ENCODE measurements at regions of chr21 and their contacts with region 1.

Region 1: DNA sequence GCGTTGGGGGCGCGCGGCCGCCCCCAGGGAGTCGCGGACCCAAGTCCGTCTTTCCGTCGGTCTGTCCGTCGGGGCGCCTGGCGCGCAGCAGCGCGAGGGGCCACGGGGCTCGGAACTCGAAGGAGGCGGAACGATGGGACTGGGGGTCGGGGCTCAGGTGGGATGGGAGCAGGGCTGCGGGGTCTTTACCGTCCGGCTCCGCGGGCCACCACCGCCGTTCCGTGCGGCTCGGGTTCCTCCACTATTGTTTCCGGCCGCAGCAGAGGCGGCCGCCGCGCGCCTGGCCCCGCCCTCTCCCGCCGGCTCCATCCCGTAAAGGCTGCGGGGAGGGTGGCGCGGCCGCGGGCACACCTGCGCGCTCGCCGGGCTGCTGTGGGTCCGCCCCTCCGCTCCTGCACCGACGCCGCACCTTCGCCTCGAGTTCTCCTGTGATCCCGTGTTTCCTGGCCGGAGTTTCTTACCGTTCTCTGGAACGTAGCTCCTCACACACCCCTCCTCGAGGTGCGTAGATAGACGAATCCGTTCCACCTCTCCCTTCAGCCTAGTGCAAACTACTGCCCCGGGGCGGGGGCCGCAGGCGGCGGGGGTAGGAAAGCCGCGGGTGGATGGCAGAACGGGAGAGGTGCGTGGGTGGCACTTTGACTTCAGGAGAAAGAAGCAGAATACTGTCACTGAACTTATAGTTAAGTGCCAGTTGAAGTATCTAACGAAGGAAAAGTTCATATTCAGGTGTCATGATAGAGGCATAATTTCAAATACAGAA is at the start of gene C21orf91:
- DNase-seq: peak; percentile 74 to 93 (median 86)
- ATAC-seq: peak; percentile 85
- H3K4me3 ChIP-seq: peak within 1 kb of the TSS; percentile 82
- H3K4me3 Mint-ChIP-seq: peak within 1 kb of the TSS; percentile 97
- H3K27ac ChIP-seq: peak within 1 kb of the TSS; percentile 88 to 92
- H3K27ac Mint-ChIP-seq: peak within 1 kb of the TSS; percentile 95
- H3K4me1 ChIP-seq: peaks cover 21% of the 10 kb centered on the region
- H3K4me1 Mint-ChIP-seq: peaks cover 53% of the 10 kb centered on the region
- H3K27me3 ChIP-seq: no peaks in the 10 kb centered on the region
- H3K27me3 Mint-ChIP-seq: no peaks in the 10 kb centered on the region
- CTCF ChIP-seq: no peak
- total RNA-seq, gene C21orf91: 40.9 to 42.2 TPM

Region 2: GRCh38 chr21:17611414-17612022 is 207.8 kb before region 1 on chr21:
- CTCF ChIA-PET with region 1: no interaction called
- POLR2A ChIA-PET with region 1: interaction called, 13 read pairs
- intact Hi-C with region 1: loop called (anchors 2 kb)
- DNase-seq: peak; percentile 54 to 92 (median 72)
- ATAC-seq: peak; percentile 69
- H3K4me3 ChIP-seq: peak overlapping the region; percentile 91
- H3K4me3 Mint-ChIP-seq: peak overlapping the region; percentile 93
- H3K27ac ChIP-seq: peak overlapping the region; percentile 58 to 60
- H3K27ac Mint-ChIP-seq: peak overlapping the region; percentile 89
- H3K4me1 ChIP-seq: peaks cover 17% of the 10 kb centered on the region
- H3K4me1 Mint-ChIP-seq: peaks cover 40% of the 10 kb centered on the region
- H3K27me3 ChIP-seq: no peaks in the 10 kb centered on the region
- H3K27me3 Mint-ChIP-seq: no peaks in the 10 kb centered on the region
- CTCF ChIP-seq: no peak

Region 3: DNA sequence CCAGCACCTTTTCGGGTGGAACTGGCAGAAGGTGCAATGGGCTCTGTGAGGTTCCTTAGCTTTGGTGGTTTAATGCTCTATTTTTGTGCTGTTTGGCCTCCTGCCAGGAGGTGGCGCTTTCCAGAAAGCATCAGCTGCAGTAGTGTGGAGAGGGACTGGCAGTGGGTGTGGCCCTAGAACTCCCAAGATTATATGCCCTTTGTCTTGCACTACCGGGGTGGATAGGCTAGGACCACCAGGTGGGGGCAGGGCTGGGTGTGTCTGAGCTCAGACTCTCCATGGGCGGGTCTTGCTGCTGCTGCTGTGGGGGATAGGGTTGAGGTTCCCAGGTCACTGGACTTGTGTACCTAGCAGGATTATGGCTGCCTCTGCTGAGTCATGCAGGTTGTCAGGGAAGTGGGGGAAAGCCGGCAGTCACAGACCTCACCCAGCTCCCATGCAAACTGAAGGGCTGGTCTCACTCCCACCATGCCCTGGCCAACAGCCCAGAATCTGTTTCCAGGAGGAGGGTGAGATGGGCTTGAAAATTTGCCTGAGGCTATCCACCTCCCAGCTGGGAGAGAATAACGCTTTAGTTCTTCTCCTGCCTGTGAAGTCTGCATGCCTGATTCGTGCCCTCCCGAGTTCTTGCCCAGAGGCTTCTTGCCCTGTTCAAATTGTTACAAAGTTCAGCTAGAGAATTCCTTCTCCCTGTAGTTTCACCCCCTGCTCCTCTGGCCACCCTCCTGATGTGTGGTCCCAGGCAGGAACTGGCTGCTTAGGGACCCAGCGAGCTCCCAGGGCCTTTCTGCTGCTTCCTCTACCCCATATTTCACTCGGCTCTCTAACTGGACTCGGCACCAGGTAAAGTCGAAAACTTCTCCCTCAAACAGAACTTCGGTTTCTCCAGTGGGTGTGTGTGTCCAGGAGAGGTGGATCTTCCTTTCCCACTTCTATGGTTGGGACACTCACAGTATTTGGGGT is 130.1 kb before region 1 on chr21:
- CTCF ChIA-PET with region 1: no interaction called
- POLR2A ChIA-PET with region 1: interaction called, 3 read pairs
- intact Hi-C with region 1: loop called (anchors 2 to 5 kb)
- DNase-seq: peak; percentile 23 to 59 (median 40)
- ATAC-seq: no peak
- H3K4me3 ChIP-seq: no peak overlapping the region
- H3K4me3 Mint-ChIP-seq: no peak overlapping the region
- H3K27ac ChIP-seq: no peak overlapping the region
- H3K27ac Mint-ChIP-seq: no peak overlapping the region
- H3K4me1 ChIP-seq: peaks cover 15% of the 10 kb centered on the region
- H3K4me1 Mint-ChIP-seq: peaks cover 36% of the 10 kb centered on the region
- H3K27me3 ChIP-seq: no peaks in the 10 kb centered on the region
- H3K27me3 Mint-ChIP-seq: no peaks in the 10 kb centered on the region
- CTCF ChIP-seq: peak; percentile 30

Region 4: GRCh38 chr21:17780539-17780938 is 38.8 kb before region 1 on chr21:
- CTCF ChIA-PET with region 1: interaction called, 3 read pairs
- POLR2A ChIA-PET with region 1: interaction called, 167 read pairs
- intact Hi-C with region 1: loop called (anchors 1 to 2 kb)
- DNase-seq: peak in 12 of 14 experiments; percentile 14 to 89 (median 44)
- ATAC-seq: peak; percentile 60
- H3K4me3 ChIP-seq: no peak overlapping the region
- H3K4me3 Mint-ChIP-seq: peak overlapping the region; percentile 62
- H3K27ac ChIP-seq: peak overlapping the region; percentile 64 to 77
- H3K27ac Mint-ChIP-seq: peak overlapping the region; percentile 93
- H3K4me1 ChIP-seq: peaks cover 57% of the 10 kb centered on the region
- H3K4me1 Mint-ChIP-seq: peaks cover 79% of the 10 kb centered on the region
- H3K27me3 ChIP-seq: no peaks in the 10 kb centered on the region
- H3K27me3 Mint-ChIP-seq: no peaks in the 10 kb centered on the region
- CTCF ChIP-seq: no peak

Region 5: DNA sequence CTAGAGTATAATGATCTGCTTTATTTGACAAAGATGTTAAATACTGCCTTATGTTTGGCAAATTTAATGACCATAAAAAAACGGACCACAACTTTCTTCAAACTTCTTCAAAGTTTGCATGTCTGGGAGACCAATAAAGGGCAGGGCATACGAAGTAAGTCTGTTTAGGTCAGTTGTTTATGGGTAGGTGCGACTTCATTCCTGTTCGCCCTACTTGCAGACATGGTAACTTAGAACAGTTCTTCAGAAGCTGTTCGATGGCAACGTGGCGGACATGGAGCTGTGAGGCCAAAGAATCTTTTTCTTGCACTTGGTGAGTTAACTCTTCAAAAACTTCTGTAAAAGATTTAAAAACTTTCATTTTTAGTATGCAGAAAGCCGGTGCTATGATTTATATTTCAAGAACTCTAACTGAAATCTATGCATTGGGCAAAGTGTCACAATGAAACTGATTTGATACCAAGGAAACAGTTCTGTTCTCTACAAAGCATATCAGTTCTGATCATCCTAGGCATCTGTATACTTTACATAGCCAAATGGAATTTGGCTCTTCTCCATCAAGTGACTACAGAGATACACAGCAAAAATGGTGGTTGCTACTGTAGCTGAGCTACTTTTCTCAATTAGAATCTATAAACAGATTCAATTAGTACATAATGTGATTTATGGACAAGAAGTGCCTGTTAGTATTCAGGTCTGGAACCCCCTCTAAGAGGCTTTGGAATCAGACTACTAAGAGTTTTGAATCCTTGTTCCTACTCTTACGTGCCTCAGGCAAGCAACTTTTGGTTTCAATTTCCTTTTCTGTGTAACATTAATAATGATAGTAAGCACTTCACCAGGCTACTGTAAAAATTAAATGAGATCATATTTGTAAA is 25.8 kb before region 1 on chr21:
- CTCF ChIA-PET with region 1: interaction called, 7 read pairs
- POLR2A ChIA-PET with region 1: interaction called, 71 read pairs
- intact Hi-C with region 1: loop called in 1 of 2 experiments (anchors 2 kb)
- DNase-seq: peak in 3 of 14 experiments; percentile 57 to 79 (median 58)
- ATAC-seq: peak; percentile 61
- H3K4me3 ChIP-seq: peak overlapping the region; percentile 48
- H3K4me3 Mint-ChIP-seq: peak overlapping the region; percentile 84
- H3K27ac ChIP-seq: peak overlapping the region; percentile 61 to 81
- H3K27ac Mint-ChIP-seq: peak overlapping the region; percentile 94
- H3K4me1 ChIP-seq: peaks cover 13% of the 10 kb centered on the region
- H3K4me1 Mint-ChIP-seq: peaks cover 78% of the 10 kb centered on the region
- H3K27me3 ChIP-seq: no peaks in the 10 kb centered on the region
- H3K27me3 Mint-ChIP-seq: no peaks in the 10 kb centered on the region
- CTCF ChIP-seq: no peak

Region 6: DNA sequence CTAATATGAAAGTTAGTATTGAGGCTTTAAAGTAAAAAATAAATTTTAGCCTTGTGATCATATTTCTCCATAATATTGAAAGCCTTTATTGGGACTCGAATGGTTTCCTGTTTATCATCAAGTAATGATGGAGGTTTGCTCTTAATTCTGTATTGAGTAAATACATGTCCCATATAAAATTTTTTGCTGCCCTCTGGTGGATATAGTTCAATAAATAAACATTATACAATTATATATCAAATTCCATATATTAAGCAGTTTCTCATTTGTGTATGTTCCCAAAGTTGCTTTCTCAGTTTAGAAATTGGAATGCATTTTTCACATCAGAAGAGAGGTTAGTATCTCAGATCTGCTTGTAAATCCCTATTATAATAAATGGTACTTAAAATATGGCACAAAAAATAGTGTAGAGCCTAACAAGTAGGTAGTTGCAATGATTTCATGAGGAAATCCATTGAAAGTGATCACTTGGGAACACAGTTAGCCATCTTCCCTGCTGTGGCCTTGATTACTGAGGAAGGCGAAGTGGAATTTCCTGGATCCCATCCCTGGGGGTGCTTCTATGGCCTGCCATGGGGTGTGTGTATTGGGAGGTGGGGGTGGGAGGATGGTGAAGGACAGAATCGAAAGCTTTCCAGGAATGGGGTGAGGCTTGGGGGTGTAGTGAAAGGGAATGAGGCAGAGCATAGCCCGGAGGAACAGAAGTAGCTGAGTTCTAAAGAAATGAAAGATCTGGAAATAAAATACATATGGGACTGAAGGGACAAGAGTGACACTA is 83.9 kb after region 1 on chr21:
- CTCF ChIA-PET with region 1: no interaction called
- POLR2A ChIA-PET with region 1: interaction called, 4 read pairs
- intact Hi-C with region 1: loop called (anchors 5 to 10 kb)
- DNase-seq: peak in 3 of 14 experiments; percentile 64 to 74 (median 66)
- ATAC-seq: peak; percentile 48
- H3K4me3 ChIP-seq: no peak overlapping the region
- H3K4me3 Mint-ChIP-seq: no peak overlapping the region
- H3K27ac ChIP-seq: no peak overlapping the region
- H3K27ac Mint-ChIP-seq: no peak overlapping the region
- H3K4me1 ChIP-seq: no peaks in the 10 kb centered on the region
- H3K4me1 Mint-ChIP-seq: peaks cover 9% of the 10 kb centered on the region
- H3K27me3 ChIP-seq: no peaks in the 10 kb centered on the region
- H3K27me3 Mint-ChIP-seq: no peaks in the 10 kb centered on the region
- CTCF ChIP-seq: peak; percentile 69

Region 7: GRCh38 chr21:19712441-19712840 is 1893.1 kb after region 1 on chr21:
- CTCF ChIA-PET with region 1: no interaction called
- POLR2A ChIA-PET with region 1: no interaction called
- intact Hi-C with region 1: no loop called
- DNase-seq: no peak
- ATAC-seq: no peak
- H3K4me3 ChIP-seq: no peak overlapping the region
- H3K4me3 Mint-ChIP-seq: no peak overlapping the region
- H3K27ac ChIP-seq: no peak overlapping the region
- H3K27ac Mint-ChIP-seq: no peak overlapping the region
- H3K4me1 ChIP-seq: no peaks in the 10 kb centered on the region
- H3K4me1 Mint-ChIP-seq: no peaks in the 10 kb centered on the region
- H3K27me3 ChIP-seq: no peaks in the 10 kb centered on the region
- H3K27me3 Mint-ChIP-seq: no peaks in the 10 kb centered on the region
- CTCF ChIP-seq: no peak